ENCODE measurements at regions of chr10 and their contacts with region 1.

Region 1: DNA sequence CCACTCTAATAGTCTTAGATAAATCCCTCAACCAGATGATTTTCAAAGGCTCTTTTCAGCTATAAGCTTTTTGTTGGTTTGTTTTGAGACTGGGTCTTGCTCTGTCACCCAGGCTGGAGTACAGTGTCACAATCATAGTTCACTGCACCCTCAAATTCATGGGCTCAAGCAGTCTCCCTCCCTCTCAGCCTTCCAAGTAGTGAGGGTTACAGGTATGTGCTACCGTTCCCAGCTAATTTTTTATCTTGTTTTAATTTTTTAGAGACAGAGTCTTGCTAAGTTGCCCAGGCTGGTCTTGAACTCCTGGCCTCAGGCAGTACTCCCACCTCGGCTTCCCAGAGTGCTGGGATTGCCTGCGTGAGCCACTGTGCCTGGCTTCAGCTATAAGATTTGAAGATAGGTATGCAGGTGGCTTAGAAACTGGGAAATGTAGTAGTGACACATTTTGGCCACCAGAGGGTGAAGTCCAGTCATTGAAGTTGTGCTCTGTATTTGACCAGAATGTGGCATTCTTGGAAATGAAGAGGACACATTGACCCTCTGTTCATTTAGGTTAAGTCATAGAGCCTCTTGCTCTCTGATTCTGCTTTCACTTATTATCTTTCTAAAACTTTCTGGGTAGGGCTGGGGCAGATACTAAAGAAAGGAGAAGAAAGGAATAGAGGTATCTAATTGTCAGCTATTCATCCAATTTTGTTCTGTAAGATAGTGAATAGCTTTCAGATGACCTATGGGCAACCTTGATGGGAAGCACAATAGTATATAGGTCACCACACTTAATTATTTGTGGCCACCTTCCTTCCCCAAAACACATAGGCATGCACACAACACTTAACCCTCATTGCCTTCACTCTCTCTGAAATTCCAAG is 36.0 kb downstream of the R3HCC1L start:
- DNase-seq: peak; percentile 27
- H3K4me3 Mint-ChIP-seq: no peak overlapping the region
- H3K27ac Mint-ChIP-seq: no peak overlapping the region
- H3K4me1 Mint-ChIP-seq: peaks cover 1% of the 10 kb centered on the region
- H3K27me3 Mint-ChIP-seq: no peaks in the 10 kb centered on the region

Region 2: GRCh38 chr10:98134431-98135221 is 35.9 kb before region 1 on chr10 and contains the start of gene R3HCC1L:
- CTCF ChIA-PET with region 1: interaction called, 10 read pairs
- POLR2A ChIA-PET with region 1: interaction called, 17 read pairs
- DNase-seq: peak; percentile 96
- H3K4me3 Mint-ChIP-seq: peak within 1 kb of the TSS; percentile 84
- H3K27ac Mint-ChIP-seq: peak within 1 kb of the TSS; percentile 77
- H3K4me1 Mint-ChIP-seq: peaks cover 46% of the 10 kb centered on the region
- H3K27me3 Mint-ChIP-seq: peaks cover 2% of the 10 kb centered on the region
- total RNA-seq, gene R3HCC1L: 18.3 to 19.0 TPM

Region 3: GRCh38 chr10:98309366-98310355 is 139.2 kb after region 1 on chr10:
- CTCF ChIA-PET with region 1: interaction called, 31 read pairs
- POLR2A ChIA-PET with region 1: no interaction called
- DNase-seq: peak; percentile 20
- H3K4me3 Mint-ChIP-seq: no peak overlapping the region
- H3K27ac Mint-ChIP-seq: no peak overlapping the region
- H3K4me1 Mint-ChIP-seq: peaks cover 2% of the 10 kb centered on the region
- H3K27me3 Mint-ChIP-seq: peaks cover 31% of the 10 kb centered on the region

Region 4: DNA sequence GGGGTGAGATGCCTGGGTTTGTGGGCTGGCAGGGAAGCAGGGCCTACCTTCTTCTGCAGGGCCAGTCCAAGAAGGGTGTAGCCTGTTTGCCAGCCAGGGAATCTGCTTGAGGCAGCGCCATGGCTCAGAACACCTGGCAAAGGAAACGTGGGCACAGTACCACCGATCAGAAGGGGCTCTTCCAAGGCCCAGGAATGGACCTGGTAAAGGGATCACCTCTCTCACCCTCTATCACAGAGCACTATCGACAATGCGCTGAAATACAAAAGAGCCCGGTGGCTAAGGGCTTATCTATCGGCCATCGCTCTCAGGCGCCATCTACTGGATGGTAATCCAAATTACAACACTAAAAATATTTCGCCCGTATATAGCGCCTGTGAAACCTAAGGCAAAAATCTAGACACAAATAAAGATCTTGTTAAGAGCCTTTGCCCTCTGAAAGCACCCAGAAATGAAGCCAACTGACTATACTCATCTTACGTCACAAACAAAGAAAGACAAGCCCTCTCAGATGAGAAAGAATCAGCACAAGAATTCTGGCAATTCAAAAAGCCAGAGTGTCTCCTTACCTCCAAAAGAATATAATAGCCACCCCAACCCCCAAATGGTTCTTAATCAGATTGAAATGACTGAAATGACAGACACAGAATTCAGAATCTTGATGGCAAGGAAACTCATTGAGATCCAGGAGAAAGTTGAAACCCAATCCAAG is 494.0 kb after region 1 on chr10:
- CTCF ChIA-PET with region 1: no interaction called
- POLR2A ChIA-PET with region 1: no interaction called
- DNase-seq: peak; percentile 42
- H3K4me3 Mint-ChIP-seq: no peak overlapping the region
- H3K27ac Mint-ChIP-seq: no peak overlapping the region
- H3K4me1 Mint-ChIP-seq: no peaks in the 10 kb centered on the region
- H3K27me3 Mint-ChIP-seq: peaks cover 29% of the 10 kb centered on the region

Measured in activated CD4-positive, alpha-beta memory T cell treated with anti-CD3 and anti-CD28 coated beads, Interleukin-2, amount 10 ng/mL, durations not matched to agents 7 days and 5 days (primary cell).